Activated B cell treated with CpG ODN at 0.5 μM for 24 hours (primary cell): ENCODE measurements at regions of chr7 and their contacts with region 1.

Region 1: GRCh38 chr7:108294595-108294994 is 161.6 kb downstream of the NRCAM start:
- DNase-seq: no peak
- ATAC-seq: peak; percentile 99
- H3K4me3 Mint-ChIP-seq: peak overlapping the region; percentile 50
- H3K27ac Mint-ChIP-seq: peak overlapping the region; percentile 70
- H3K4me1 Mint-ChIP-seq: peaks cover 14% of the 10 kb centered on the region
- H3K27me3 Mint-ChIP-seq: no peaks in the 10 kb centered on the region
- CTCF ChIP-seq: no peak

Region 2: GRCh38 chr7:108181073-108181985 is 113.3 kb before region 1 on chr7:
- CTCF ChIA-PET with region 1: interaction called, 4 read pairs
- POLR2A ChIA-PET with region 1: no interaction called
- intact Hi-C with region 1: loop called (anchors 5 kb)
- DNase-seq: no peak
- ATAC-seq: peak; percentile 60
- H3K4me3 Mint-ChIP-seq: no peak overlapping the region
- H3K27ac Mint-ChIP-seq: no peak overlapping the region
- H3K4me1 Mint-ChIP-seq: no peaks in the 10 kb centered on the region
- H3K27me3 Mint-ChIP-seq: no peaks in the 10 kb centered on the region
- CTCF ChIP-seq: peak; percentile 75

Region 3: DNA sequence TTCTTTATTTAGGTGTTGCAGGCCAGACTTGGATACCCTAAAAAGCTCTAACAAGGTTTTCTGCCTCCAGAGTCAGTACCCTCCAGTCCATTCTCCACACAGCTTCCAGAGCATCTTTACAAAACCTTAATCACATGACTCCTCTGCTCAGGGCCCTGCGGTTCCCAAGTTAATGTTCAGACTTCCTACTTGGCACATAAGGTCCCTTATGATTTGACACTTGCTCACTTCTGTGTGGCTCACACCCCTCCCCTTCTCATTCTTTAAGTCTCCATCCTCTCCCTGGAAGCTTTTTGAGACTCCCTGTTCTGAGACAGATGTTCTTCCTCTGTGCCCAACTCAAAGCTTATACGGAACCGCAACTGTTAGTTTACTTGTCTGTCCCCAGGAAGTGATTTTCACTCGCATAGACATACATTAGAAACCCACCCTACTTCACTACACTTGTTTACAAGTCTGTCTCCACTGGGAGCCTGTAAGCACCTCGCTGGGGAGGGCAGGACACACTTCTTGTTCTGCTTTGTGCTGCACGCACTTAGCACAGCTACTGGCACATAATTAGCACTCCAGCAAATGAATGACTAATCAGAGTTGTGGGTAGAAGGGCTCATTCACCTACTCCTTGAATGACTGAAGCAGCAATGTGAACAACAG is 10.1 kb before region 1 on chr7:
- CTCF ChIA-PET with region 1: no interaction called
- POLR2A ChIA-PET with region 1: interaction called, 3 read pairs
- intact Hi-C with region 1: loop called (anchors 1 kb)
- DNase-seq: no peak
- ATAC-seq: peak; percentile 75
- H3K4me3 Mint-ChIP-seq: peak overlapping the region; percentile 0
- H3K27ac Mint-ChIP-seq: no peak overlapping the region
- H3K4me1 Mint-ChIP-seq: peaks cover 13% of the 10 kb centered on the region
- H3K27me3 Mint-ChIP-seq: peaks cover 25% of the 10 kb centered on the region
- CTCF ChIP-seq: no peak

Region 4: DNA sequence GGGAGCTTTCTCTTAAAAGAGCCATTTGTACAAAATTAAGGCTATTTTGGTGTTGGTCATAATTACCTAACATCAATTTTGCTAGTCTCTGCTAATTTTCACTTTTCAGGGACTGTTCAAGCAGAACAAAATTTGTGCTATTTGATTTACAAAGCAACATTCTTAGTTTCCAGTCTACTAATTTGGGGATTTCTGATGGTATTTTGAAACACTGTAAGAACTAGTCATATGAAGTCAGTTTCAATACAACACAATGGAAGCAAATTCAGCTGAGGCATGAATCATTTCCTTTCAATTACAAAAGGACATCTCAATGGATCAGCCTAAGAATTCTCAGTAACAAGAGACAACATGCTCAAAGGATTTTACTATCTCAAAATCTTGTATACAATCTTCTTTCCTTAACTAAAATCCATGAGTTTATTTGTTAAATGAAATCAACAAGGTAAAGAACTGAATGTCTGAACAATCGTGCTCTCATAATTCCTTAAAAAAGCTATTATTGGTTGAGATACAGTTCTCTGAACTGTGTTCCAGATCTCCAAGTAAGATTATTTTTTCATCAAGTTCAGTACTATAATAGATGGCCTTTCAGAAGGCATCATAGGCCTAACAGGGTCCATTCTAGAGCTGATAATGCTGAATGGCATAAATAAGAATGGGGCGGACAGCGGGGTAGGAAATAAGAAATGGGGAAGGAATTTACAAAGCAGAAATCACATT is 17.0 kb after region 1 on chr7:
- CTCF ChIA-PET with region 1: no interaction called
- POLR2A ChIA-PET with region 1: interaction called, 3 read pairs
- intact Hi-C with region 1: loop called (anchors 2 kb)
- DNase-seq: no peak
- ATAC-seq: peak; percentile 42
- H3K4me3 Mint-ChIP-seq: no peak overlapping the region
- H3K27ac Mint-ChIP-seq: peak overlapping the region; percentile 54
- H3K4me1 Mint-ChIP-seq: peaks cover 28% of the 10 kb centered on the region
- H3K27me3 Mint-ChIP-seq: no peaks in the 10 kb centered on the region
- CTCF ChIP-seq: no peak

Region 5: DNA sequence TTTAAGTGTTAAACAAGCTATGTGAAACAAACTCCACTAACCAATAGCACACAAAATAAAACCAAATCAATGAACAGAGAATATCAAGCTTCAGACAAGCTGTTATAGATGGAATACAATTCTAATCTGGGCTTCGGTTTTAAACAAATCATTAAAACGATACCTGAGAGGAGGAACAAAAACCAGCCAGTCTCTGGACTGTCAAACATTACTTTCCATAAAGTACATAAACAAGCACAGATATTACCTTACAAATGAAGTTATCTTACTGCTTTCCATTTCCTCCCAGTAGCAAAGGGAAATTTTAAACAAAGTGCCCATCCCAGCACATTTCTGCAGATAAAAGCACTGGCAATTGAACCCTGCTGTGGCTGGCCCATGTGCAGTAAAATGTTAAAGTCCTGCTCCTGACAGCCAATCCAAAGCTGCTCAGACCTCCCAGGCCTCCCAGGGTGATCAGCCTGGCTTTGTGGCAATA is 33.6 kb after region 1 on chr7:
- CTCF ChIA-PET with region 1: no interaction called
- POLR2A ChIA-PET with region 1: no interaction called
- intact Hi-C with region 1: loop called (anchors 1 kb)
- DNase-seq: no peak
- ATAC-seq: peak; percentile 94
- H3K4me3 Mint-ChIP-seq: peak overlapping the region; percentile 69
- H3K27ac Mint-ChIP-seq: peak overlapping the region; percentile 87
- H3K4me1 Mint-ChIP-seq: peaks cover 37% of the 10 kb centered on the region
- H3K27me3 Mint-ChIP-seq: no peaks in the 10 kb centered on the region
- CTCF ChIP-seq: no peak

Region 6: DNA sequence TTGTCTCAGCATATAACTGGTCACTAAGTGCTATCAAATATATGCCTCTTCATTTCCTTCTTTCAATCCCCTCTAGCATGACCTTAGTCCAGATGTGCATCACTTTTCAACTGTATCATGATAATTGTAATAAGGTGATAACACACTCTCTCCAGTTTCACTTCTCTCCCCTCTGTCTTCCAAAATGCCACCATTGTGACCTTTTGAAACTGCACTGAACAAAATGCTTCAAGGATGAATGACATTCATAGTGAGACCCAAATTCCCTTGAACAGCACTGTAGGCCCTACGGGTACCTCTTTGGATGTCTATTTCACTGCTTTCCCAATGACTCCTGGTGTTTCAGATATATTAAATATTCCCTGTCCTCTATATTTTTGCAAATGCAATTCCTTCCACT is 499.9 kb after region 1 on chr7:
- CTCF ChIA-PET with region 1: no interaction called
- POLR2A ChIA-PET with region 1: no interaction called
- intact Hi-C with region 1: no loop called
- DNase-seq: no peak
- ATAC-seq: no peak
- H3K4me3 Mint-ChIP-seq: no peak overlapping the region
- H3K27ac Mint-ChIP-seq: no peak overlapping the region
- H3K4me1 Mint-ChIP-seq: no peaks in the 10 kb centered on the region
- H3K27me3 Mint-ChIP-seq: no peaks in the 10 kb centered on the region
- CTCF ChIP-seq: no peak